ENCODE measurements at regions of chr11 and their contacts with region 1.

Region 1: DNA sequence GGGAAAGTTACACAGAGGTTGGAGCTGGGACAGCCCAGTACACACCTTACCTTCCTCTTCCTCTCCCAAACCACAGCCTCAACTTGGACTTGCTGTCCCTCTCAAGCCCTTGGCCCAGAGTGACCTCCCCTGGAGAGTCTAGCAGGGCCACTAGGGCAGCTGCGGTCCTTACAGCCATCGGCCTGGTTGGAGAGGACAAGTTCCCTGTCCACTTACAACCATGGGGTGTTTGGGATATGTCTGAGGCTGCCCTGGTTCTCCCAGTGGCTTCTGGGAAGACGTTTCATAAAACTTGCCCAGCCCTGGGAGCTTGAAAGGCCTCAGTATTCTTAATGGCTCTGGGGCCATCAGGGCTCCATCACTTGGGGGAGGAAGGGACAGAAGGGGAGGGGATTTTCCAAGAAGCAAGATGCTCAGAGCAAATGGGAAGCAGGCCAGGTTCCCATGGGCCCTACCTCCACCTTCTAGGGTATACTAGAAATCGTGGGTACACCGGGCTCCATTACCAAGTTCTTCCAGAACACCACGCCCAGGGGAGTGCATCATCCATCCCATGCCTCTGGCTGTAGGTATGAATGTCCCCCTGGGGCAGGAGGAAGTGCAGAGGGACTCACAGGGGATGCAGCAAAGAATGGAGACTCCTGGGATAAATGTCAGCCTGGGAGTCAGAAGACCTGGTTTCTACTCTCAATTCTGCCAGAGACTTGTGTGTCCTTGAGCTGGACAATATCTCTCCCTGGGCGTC is 12.9 kb upstream of the DGKZ start:
- DNase-seq: no peak
- H3K4me3 Mint-ChIP-seq: peak overlapping the region; percentile 21
- H3K27ac Mint-ChIP-seq: no peak overlapping the region
- H3K4me1 Mint-ChIP-seq: peaks cover 44% of the 10 kb centered on the region
- H3K27me3 Mint-ChIP-seq: peaks cover 50% of the 10 kb centered on the region

Region 2: DNA sequence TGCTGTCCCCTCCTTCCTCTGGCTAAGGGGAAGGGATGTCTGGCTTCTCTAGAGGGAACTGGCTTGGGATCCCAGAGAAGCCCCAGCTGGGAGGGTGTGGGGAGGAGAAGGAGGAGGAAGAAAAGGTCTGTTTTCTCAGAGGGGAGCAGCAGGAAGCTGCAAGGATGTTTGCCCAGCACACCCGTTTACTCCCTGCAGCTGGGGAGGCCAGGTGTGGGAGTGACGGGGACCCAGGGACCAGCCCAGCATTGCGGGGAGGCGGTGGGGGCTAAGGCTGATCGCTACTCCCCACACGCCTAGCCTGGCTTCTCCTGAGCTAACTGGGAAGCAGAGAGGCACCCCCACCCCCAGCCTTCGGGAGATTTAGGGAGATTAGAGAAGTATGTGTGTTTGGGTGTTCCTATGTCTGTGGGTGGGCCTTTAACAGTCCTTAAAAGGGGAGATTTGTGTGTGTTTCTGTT is 53.0 kb before region 1 on chr11:
- intact Hi-C with region 1: no loop called
- DNase-seq: no peak
- H3K4me3 Mint-ChIP-seq: no peak overlapping the region
- H3K27ac Mint-ChIP-seq: no peak overlapping the region
- H3K4me1 Mint-ChIP-seq: no peaks in the 10 kb centered on the region
- H3K27me3 Mint-ChIP-seq: peaks cover 67% of the 10 kb centered on the region

Region 3: GRCh38 chr11:46295312-46296058 is 38.9 kb before region 1 on chr11:
- intact Hi-C with region 1: no loop called
- DNase-seq: peak; percentile 93
- H3K4me3 Mint-ChIP-seq: peak overlapping the region; percentile 84
- H3K27ac Mint-ChIP-seq: no peak overlapping the region
- H3K4me1 Mint-ChIP-seq: peaks cover 6% of the 10 kb centered on the region
- H3K27me3 Mint-ChIP-seq: peaks cover 37% of the 10 kb centered on the region

Region 4: GRCh38 chr11:46346886-46347636 is 12.7 kb after region 1 on chr11 and contains the start of gene DGKZ:
- intact Hi-C with region 1: loop called (anchors 1 kb)
- DNase-seq: peak; percentile 98
- H3K4me3 Mint-ChIP-seq: peak within 1 kb of the TSS; percentile 88
- H3K27ac Mint-ChIP-seq: peak within 1 kb of the TSS; percentile 91
- H3K4me1 Mint-ChIP-seq: peaks cover 73% of the 10 kb centered on the region
- H3K27me3 Mint-ChIP-seq: no peaks in the 10 kb centered on the region
- total RNA-seq, gene DGKZ: 87.4 and 94.7 TPM in 2 replicates